ENCODE measurements at regions of chr10 and their contacts with region 1.

Region 1: GRCh38 chr10:119199231-119199992 is 8.0 kb upstream of the GRK5 start:
- DNase-seq: peak; percentile 62
- ATAC-seq: peak; percentile 96
- H3K4me3 Mint-ChIP-seq: no peak overlapping the region
- H3K27ac Mint-ChIP-seq: no peak overlapping the region
- H3K4me1 Mint-ChIP-seq: peaks cover 9% of the 10 kb centered on the region
- H3K27me3 Mint-ChIP-seq: no peaks in the 10 kb centered on the region; the same call in 1 of the 2 replicates
- CTCF ChIP-seq: 0 out of 2 replicates have a peak, but pooled peaks have one; percentile 19

Region 2: GRCh38 chr10:119120413-119120867 is 79.0 kb before region 1 on chr10:
- CTCF ChIA-PET with region 1: no interaction called
- POLR2A ChIA-PET with region 1: no interaction called
- DNase-seq: no peak
- ATAC-seq: no peak
- H3K4me3 Mint-ChIP-seq: no peak overlapping the region
- H3K27ac Mint-ChIP-seq: no peak overlapping the region
- H3K4me1 Mint-ChIP-seq: no peaks in the 10 kb centered on the region
- H3K27me3 Mint-ChIP-seq: no peaks in the 10 kb centered on the region
- CTCF ChIP-seq: no peak

Region 3: DNA sequence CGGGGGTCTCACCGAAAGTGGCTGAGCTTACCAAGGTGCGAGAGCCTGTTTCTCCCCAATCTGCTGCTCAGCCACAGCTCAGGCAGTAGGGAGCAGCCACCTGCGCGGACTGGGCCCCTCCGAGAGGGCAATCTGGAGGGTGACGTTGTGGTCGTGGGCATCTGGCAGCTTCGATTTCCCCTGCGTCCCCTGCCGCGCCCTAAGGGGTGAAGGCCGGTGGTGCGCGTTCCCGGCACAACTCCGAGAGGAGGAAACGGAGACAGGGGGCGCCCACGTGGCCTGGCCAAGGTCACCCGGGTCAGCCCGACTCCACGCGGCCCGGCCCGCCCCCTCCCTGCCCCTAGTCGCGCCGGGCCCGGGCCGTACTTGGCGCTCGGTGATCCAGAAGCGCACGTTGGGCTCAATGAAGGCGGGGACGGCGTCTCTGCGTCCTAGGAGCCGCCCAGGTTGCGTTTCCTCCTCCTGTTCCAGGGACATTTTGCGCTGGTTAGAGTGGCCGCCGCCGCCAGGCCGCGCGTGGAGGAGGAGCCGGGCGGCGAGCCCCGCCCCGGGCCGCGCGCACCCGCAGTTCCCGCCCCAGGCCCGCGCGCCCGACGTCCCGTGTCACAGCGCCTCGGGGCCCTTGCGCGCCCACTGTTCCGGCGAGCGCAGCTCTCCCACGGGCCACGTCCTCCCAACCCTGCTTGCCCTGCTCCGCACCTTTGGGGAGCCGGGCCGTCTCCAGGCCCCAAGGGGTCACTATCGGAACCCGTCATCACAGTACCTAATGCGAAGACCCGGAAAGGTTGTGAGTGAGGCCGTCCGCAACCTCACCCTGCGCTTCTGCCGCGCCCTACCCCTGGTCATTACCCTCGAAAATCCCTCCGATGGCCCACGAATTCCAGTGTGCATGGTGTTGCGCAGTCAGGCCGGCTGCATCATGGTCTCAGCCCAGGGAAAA is 34.0 kb before region 1 on chr10 and contains the start of gene SFXN4:
- CTCF ChIA-PET with region 1: interaction called, 13 read pairs
- POLR2A ChIA-PET with region 1: no interaction called
- DNase-seq: peak; percentile 62
- ATAC-seq: peak; percentile 66
- H3K4me3 Mint-ChIP-seq: peak within 1 kb of the TSS; percentile 85
- H3K27ac Mint-ChIP-seq: peak within 1 kb of the TSS; percentile 78; the same call in 1 of the 2 replicates
- H3K4me1 Mint-ChIP-seq: peaks cover 19% of the 10 kb centered on the region
- H3K27me3 Mint-ChIP-seq: no peaks in the 10 kb centered on the region
- CTCF ChIP-seq: no peak
- total RNA-seq, gene SFXN4: 23.8 to 25.9 TPM (median 24.0 TPM) in 3 replicates

Region 4: GRCh38 chr10:119270762-119271366 is 71.5 kb after region 1 on chr10:
- CTCF ChIA-PET with region 1: interaction called, 11 read pairs
- POLR2A ChIA-PET with region 1: no interaction called
- DNase-seq: no peak
- ATAC-seq: no peak
- H3K4me3 Mint-ChIP-seq: no peak overlapping the region
- H3K27ac Mint-ChIP-seq: no peak overlapping the region
- H3K4me1 Mint-ChIP-seq: peaks cover 19% of the 10 kb centered on the region
- H3K27me3 Mint-ChIP-seq: no peaks in the 10 kb centered on the region
- CTCF ChIP-seq: no peak

Region 5: DNA sequence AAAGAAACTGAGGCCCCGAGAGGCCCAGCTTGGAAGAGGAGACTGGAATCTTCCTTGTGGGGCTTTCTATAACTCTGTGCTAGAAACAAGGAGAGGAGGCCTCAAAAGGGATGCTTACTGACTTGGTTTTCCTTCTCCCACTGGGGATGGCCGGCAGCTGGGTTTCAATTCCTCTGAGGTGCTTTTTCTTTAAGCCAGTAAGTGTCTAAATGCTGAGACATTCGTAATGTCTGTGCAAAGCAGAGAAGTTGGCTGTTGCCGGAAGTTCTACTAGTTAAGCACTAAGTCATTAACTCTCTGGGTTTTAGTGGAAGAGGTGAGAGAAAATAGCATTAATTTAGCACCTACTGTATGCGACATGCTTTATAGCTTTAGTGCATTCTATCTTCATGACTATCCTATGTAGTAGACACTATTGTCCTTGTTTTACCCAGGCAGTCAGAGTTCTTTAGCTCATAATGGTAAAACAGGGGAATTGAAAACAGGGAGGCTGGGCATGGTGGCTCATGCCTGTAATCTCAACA is 207.9 kb after region 1 on chr10:
- CTCF ChIA-PET with region 1: interaction called, 86 read pairs
- POLR2A ChIA-PET with region 1: no interaction called
- DNase-seq: no peak
- ATAC-seq: no peak
- H3K4me3 Mint-ChIP-seq: no peak overlapping the region
- H3K27ac Mint-ChIP-seq: no peak overlapping the region
- H3K4me1 Mint-ChIP-seq: no peaks in the 10 kb centered on the region
- H3K27me3 Mint-ChIP-seq: no peaks in the 10 kb centered on the region
- CTCF ChIP-seq: no peak

Region 6: GRCh38 chr10:119421887-119422681 is 222.7 kb after region 1 on chr10:
- CTCF ChIA-PET with region 1: interaction called, 86 read pairs
- POLR2A ChIA-PET with region 1: no interaction called
- DNase-seq: no peak
- ATAC-seq: peak; percentile 65
- H3K4me3 Mint-ChIP-seq: no peak overlapping the region
- H3K27ac Mint-ChIP-seq: no peak overlapping the region
- H3K4me1 Mint-ChIP-seq: peaks cover 19% of the 10 kb centered on the region
- H3K27me3 Mint-ChIP-seq: no peaks in the 10 kb centered on the region
- CTCF ChIP-seq: no peak

Region 7: DNA sequence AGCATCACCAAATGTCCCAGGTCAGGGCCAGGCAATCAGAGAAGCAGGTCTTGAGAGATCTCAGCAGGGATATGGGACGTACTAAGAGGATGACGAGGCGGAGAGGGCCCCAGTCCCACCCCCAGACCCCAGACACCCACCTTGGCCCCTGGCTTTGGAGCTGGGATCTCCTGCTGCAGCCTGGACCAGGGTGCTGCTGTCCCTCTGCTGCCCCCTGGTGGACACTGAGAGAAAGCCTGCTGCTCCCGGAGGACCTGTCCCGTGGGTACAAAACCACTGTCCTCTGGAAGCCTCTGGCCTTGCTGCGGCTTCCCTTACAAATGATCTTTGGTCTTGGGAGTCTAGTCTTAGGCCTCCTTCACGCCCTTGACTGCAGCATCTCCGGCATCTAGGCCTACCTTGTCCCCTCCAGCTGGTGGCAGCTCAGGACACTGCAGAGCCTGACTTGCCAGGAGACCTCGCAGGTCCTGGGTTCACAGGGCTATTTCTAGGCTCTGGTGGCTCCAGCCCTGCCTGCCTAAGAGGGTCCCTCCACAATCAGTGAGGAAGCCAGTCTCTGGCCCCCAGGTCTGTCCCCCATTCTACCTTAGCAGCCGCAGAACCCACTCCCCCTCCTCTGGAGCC is 246.0 kb after region 1 on chr10:
- CTCF ChIA-PET with region 1: interaction called, 95 read pairs
- POLR2A ChIA-PET with region 1: no interaction called
- DNase-seq: peak; percentile 92
- ATAC-seq: peak; percentile 82
- H3K4me3 Mint-ChIP-seq: no peak overlapping the region
- H3K27ac Mint-ChIP-seq: no peak overlapping the region
- H3K4me1 Mint-ChIP-seq: peaks cover 11% of the 10 kb centered on the region
- H3K27me3 Mint-ChIP-seq: no peaks in the 10 kb centered on the region; the same call in 1 of the 2 replicates
- CTCF ChIP-seq: peak; percentile 97